Left ventricle myocardium superior (tissue), 1 donor: ENCODE measurements at regions of chr22 and their contacts with region 1.

Region 1: GRCh38 chr22:33023153-33023827 is 34.9 kb downstream of the SYN3 start:
- DNase-seq: no peak
- ATAC-seq: no peak

Region 2: GRCh38 chr22:32501836-32502745 is 521.2 kb before region 1 on chr22:
- intact Hi-C with region 1: no loop called
- DNase-seq: no peak
- ATAC-seq: no peak

Region 3: GRCh38 chr22:33202455-33202854 is 179.2 kb after region 1 on chr22:
- intact Hi-C with region 1: loop called (anchors 5 kb)
- DNase-seq: no peak
- ATAC-seq: no peak